Gastrocnemius medialis (tissue), 4 donors: ENCODE measurements at regions of chr6 and their contacts with region 1.

Region 1: DNA sequence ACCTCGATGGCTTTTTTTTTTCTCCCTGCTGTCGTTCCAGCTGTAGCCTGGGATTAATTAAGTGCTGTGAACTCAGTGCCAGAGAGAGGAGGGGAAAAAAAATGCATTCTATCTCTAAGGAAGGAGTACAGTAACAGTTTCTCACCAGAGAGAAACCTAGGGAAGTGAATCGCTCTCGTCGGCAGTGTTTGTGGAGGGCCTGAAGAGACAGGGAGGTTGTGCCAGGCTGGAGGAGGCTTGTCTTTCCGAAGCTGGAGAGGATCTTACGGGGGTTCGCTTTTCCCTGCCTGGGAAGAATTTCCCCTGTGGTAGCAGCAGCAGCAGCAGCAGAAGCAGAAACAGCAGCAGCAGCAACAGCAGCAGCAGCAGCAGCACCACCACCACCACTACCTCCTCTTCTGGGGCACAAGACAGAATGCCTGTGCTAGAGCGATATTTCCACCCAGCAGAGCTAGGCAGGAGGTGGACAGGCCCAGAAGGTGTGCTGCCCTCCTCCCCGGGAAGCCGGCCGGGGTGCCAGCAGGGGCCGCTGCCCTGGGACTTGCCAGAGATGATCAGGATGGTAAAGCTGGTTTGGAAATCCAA is 186.5 kb downstream of the PDE7B start:
- DNase-seq: no peak
- ATAC-seq: peak; percentile 24 to 39
- H3K4me3 ChIP-seq: peak overlapping the region; percentile 29 to 45 (median 38)
- H3K27ac ChIP-seq: peak overlapping the region; percentile 62 to 76 (median 69)
- H3K4me1 ChIP-seq: peaks cover 19 to 43% of the 10 kb centered on the region in 2 donors
- H3K27me3 ChIP-seq: no peaks in the 10 kb centered on the region
- CTCF ChIP-seq: peak in 2 of 5 experiments; percentile 18 to 22
- POLR2A ChIP-seq: no peak

Region 2: GRCh38 chr6:136103763-136104311 is 65.9 kb after region 1 on chr6:
- in situ Hi-C with region 1: no loop called
- intact Hi-C with region 1: loop called (anchors 5 kb)
- DNase-seq: peak; percentile 30
- ATAC-seq: peak; percentile 82 to 90
- H3K4me3 ChIP-seq: no peak overlapping the region
- H3K27ac ChIP-seq: peak overlapping the region; percentile 58 to 79 (median 68)
- H3K4me1 ChIP-seq: peaks cover 13 to 44% of the 10 kb centered on the region in 2 donors
- H3K27me3 ChIP-seq: no peaks in the 10 kb centered on the region
- CTCF ChIP-seq: no peak
- POLR2A ChIP-seq: no peak

Region 3: GRCh38 chr6:136326038-136326553 is 288.1 kb after region 1 on chr6:
- in situ Hi-C with region 1: no loop called
- intact Hi-C with region 1: no loop called
- DNase-seq: no peak
- ATAC-seq: no peak
- H3K4me3 ChIP-seq: no peak overlapping the region
- H3K27ac ChIP-seq: no peak overlapping the region
- H3K4me1 ChIP-seq: no peaks in the 10 kb centered on the region
- H3K27me3 ChIP-seq: no peaks in the 10 kb centered on the region
- CTCF ChIP-seq: no peak
- POLR2A ChIP-seq: no peak